ENCODE measurements at regions of chr2 and their contacts with region 1.

Region 1: GRCh38 chr2:70301344-70302194 is at the start of gene FAM136A:
- DNase-seq: peak; percentile 40 to 92 (median 84)

Region 2: DNA sequence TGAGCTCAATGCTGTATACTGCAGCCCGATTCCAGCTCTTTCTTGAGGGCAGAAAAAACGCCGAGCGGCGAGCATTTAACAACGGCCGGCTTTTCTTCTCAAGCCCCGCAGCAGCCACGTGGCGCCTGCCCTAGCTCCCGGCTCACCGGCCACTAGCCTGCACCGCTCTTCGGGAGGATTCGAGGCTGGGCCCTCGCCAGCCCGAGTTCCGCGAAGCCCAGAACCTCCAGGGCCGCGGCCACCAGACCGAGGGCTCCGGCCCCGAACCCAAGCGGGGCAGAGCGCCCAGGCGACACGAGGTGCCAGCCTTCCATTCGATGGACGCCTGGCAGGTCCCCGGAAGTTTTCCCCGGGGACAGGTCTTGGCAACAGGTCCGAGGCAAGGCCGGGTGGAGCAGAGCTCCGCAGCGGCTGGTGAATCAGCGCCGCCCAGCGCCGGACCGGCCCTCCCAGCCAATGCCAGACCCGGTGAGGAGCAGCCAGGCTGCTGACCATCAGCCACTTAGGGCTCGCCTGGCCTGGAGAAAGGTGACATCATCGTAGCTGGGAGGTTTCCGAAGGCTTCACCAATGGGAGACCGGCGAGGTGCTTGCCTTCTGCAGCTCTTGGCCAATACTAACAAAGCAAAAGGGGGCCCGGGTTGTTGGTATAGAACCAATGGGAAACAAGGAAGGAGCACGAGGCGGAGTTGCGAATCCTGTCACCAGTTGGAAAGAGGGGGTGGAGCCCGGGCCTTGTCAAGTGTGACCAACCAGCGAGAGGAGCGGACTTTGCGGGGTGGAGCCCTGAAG is 387.2 kb before region 1 on chr2:
- intact Hi-C with region 1: loop called (anchors 5 kb)
- DNase-seq: peak; percentile 95 to 100 (median 100)

Region 3: DNA sequence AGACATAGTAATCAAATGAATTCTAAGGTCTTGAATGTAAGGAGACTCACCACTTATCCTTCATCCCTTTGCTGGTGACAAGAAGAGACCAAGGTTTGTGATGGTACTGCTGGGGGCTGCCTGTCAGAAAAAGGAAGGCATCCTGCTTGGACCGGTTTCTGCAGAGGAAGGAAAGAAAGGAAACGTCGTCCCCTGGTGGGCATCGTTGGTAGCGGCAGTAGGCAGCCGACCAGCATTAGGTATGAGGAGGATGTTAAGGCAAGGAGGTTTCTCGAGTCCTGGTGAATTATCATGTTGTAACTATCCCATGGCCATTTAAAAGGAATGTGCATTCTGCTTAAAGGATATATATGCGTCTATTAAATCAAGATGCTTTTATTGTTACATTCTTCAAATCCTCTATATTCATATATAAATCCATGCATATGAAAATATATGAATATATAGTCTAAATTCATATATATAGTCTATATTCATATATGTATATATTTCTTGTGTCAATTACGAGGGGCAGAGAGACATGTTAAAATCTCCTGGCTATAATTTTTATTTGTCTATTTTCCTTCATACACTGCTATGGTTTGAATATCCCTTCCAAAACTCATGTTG is 346.4 kb after region 1 on chr2:
- intact Hi-C with region 1: loop called (anchors 10 kb)
- DNase-seq: peak; percentile 46 to 90 (median 78)

Region 4: DNA sequence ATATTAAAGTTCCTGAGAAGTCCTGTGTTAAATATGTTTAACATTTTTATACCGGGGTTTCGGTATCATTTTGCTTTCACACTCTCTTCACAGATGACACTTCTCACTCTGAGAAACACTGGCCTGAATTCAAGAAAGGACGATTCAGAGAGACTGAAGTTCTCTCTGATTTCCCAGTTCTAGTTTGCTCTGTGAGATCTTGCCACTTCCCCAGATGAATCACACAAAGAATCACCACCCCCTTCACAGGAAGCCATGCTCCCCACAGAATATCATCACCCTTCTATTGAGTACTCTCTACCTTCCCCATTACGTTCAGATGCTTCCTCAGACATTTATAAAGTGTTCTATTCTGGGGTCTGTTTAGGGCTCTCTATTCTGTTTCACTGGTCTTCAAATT is 550.1 kb after region 1 on chr2:
- intact Hi-C with region 1: no loop called
- DNase-seq: peak in 9 of 42 donors; percentile 6 to 48 (median 20)

Measured in head of caudate nucleus (tissue), 42 donors.